GM12878 (cell line): ENCODE measurements at regions of chr5 and their contacts with region 1.

Region 1: DNA sequence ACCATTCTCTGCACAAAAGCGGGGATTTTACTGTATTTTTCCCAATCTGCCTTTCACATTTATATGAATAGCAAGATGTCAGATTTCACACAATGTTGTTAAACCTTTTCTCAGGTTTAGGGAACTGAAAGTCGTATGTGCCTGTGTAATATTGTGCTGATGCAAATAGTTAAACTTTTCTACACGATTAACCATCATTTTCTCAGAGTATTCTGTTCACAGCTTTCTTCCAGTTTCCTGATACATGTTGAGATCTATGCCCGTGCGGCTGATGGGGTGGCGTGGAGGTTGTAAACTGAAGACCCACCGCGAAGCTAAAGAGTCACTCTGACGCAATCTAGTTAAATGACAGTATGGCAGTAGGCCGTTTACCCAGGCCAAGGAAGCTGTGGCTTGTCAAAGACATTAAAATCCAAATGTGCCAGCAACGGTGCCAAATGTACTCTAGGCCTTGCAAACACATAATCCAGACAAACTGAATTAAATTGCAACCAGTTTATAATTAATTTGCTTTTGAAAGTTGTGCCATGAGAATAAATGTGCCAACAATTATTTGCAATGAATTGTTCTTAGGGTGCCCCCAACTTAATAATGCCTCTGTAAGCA is 145.7 kb downstream of the EBF1 start:
- DNase-seq: peak; percentile 98
- ATAC-seq: peak; percentile 79
- H3K4me3 ChIP-seq: 0 out of 2 replicates have a peak overlapping the region, but pooled peaks have one; percentile 6
- H3K27ac ChIP-seq: peak overlapping the region; percentile 93
- H3K4me1 ChIP-seq: peaks cover 70% of the 10 kb centered on the region
- H3K27me3 ChIP-seq: no peaks in the 10 kb centered on the region
- CTCF ChIP-seq: no peak
- EP300 ChIP-seq: peak; percentile 94 to 98; a peak in 3 of 4 replicates
- POLR2A ChIP-seq: peak; percentile 47; the same call in 1 of the 2 replicates
- RAD21 ChIP-seq: 0 out of 2 replicates have a peak, but pooled peaks have one; percentile 23

Region 2: GRCh38 chr5:158406884-158407823 is 546.9 kb before region 1 on chr5:
- CTCF ChIA-PET with region 1: no interaction called
- POLR2A ChIA-PET with region 1: no interaction called
- RAD21 ChIA-PET with region 1: interaction called, 5 read pairs
- SMC1A ChIA-PET with region 1: interaction called, 4 read pairs
- in situ Hi-C with region 1: no loop called
- intact Hi-C with region 1: loop called (anchors 10 kb)
- DNase-seq: no peak
- ATAC-seq: peak; percentile 82
- H3K4me3 ChIP-seq: no peak overlapping the region
- H3K27ac ChIP-seq: no peak overlapping the region
- H3K4me1 ChIP-seq: peaks cover 5% of the 10 kb centered on the region; the same call in 1 of the 2 replicates
- H3K27me3 ChIP-seq: no peaks in the 10 kb centered on the region
- CTCF ChIP-seq: no peak
- EP300 ChIP-seq: peak in 1 of 2 experiments; percentile 29; a peak in 1 of 4 replicates
- POLR2A ChIP-seq: no peak
- RAD21 ChIP-seq: no peak

Region 3: DNA sequence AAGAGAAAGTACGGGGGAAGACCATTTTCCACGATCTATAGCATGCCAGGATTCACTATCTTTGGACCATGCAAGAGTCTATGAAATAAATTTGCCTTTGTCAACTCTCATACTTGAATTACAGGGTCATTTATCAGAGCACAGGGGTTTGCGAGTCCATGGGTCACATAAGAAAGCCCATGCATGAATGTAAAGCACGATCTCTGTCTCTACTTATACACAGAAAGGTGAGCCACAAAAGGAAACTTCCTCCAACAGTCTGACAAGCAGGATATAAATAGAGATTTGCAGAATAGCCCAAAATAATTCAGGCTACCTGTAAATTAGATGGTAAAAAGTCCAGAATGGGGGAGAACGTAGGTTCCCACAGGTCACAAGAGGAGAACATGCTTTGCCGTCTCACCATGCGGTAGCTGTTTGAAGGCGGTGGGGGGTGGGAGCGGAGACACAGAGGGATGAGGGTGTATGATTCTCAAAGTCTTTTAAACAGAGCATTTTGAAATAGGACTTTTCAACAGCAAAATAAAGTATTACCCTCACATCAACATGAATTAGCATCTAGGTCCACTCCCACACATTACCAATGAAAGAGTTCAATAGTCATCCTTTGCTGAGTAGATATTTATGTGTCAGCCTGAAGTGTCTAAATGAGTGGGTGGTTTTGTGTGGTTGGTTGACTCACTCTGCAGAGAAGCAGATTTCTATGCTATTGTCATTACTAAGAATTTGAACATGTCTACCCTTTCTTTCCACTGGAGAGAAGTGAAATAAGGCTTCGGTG is 134.0 kb before region 1 on chr5:
- CTCF ChIA-PET with region 1: interaction called, 3 read pairs
- POLR2A ChIA-PET with region 1: interaction called, 3 read pairs
- RAD21 ChIA-PET with region 1: interaction called, 9 read pairs
- SMC1A ChIA-PET with region 1: interaction called, 12 read pairs
- in situ Hi-C with region 1: no loop called
- intact Hi-C with region 1: no loop called
- DNase-seq: peak; percentile 77
- ATAC-seq: peak; percentile 90
- H3K4me3 ChIP-seq: peak overlapping the region; percentile 53
- H3K27ac ChIP-seq: peak overlapping the region; percentile 83
- H3K4me1 ChIP-seq: peaks cover 50% of the 10 kb centered on the region
- H3K27me3 ChIP-seq: no peaks in the 10 kb centered on the region
- CTCF ChIP-seq: no peak
- EP300 ChIP-seq: peak in 1 of 2 experiments; percentile 5; a peak in 1 of 4 replicates
- POLR2A ChIP-seq: no peak
- RAD21 ChIP-seq: peak; percentile 10; the same call in 1 of the 2 replicates

Region 4: DNA sequence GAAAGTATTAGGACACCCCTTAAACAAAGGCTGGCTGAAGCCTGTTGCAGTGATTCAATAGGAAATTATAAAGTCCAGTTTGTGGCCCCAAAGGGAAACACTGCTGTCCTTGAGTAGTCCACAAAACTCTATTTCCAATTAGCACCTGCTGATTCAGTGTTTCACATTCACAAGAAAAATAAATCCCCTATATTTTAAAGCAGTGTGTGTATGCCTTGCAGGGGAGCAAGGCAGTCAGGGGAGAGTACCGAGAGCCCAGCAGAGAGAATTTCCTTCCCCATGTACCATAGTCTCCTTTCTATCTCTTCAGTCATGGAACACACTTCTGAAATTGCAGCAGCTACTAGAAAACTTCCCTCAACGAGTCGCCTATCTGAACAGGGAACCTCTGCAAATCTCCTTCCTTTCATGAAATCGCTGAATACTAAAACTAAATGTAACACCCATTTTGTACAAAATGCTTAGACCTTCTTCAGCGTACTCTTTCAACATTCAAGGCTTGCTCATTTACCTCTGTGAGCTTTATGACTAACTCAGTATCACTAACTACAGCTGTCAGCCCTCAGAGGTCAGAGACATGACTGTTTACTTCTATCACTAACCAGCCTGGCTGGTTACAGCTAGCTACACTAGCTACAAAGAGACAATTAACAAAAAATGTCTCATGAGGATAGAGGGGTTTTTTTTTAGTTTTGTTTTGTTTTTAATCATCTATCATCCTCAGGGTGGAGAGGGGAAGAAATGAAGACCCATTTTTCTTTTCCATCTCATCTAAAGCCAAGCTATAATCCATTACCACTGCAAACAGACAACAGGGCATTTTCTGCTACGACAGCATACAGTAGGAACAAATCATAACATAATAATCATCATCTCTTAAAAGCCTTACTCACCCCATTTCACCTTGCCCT is 43.0 kb before region 1 on chr5:
- CTCF ChIA-PET with region 1: interaction called, 4 read pairs
- POLR2A ChIA-PET with region 1: interaction called, 7 read pairs
- RAD21 ChIA-PET with region 1: interaction called, 32 read pairs
- SMC1A ChIA-PET with region 1: interaction called, 399 read pairs
- in situ Hi-C with region 1: no loop called
- intact Hi-C with region 1: loop called (anchors 5 kb)
- DNase-seq: no peak
- ATAC-seq: peak; percentile 88
- H3K4me3 ChIP-seq: no peak overlapping the region
- H3K27ac ChIP-seq: peak overlapping the region; percentile 50
- H3K4me1 ChIP-seq: peaks cover 32% of the 10 kb centered on the region
- H3K27me3 ChIP-seq: no peaks in the 10 kb centered on the region
- CTCF ChIP-seq: no peak
- EP300 ChIP-seq: peak; percentile 29 to 85; a peak in 2 of 4 replicates
- POLR2A ChIP-seq: no peak
- RAD21 ChIP-seq: no peak

Region 5: DNA sequence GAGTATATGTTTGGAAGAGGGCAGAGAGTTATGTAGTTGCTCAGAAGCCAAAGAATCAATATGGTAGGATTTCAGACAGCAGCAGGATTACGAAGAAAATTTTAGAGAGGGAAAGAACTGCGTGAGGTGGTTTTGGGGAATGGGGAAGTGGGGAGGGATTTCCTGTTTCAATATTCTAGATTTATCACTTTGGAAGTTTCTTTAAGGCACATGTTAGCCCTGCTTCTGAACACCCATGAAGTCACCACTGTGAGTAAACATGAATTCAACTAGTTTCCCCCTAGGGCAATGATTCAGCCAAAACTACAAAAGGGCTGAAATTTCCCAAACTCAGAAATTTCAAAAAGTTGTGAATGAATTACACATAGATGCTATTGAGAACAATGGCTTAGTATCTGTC is 13.5 kb after region 1 on chr5:
- CTCF ChIA-PET with region 1: interaction called, 9 read pairs
- POLR2A ChIA-PET with region 1: interaction called, 8 read pairs
- RAD21 ChIA-PET with region 1: interaction called, 44 read pairs
- SMC1A ChIA-PET with region 1: interaction called, 35 read pairs
- in situ Hi-C with region 1: no loop called
- intact Hi-C with region 1: no loop called
- DNase-seq: no peak
- ATAC-seq: peak; percentile 74
- H3K4me3 ChIP-seq: no peak overlapping the region
- H3K27ac ChIP-seq: peak overlapping the region; percentile 14; the same call in 1 of the 2 replicates
- H3K4me1 ChIP-seq: peaks cover 6% of the 10 kb centered on the region
- H3K27me3 ChIP-seq: no peaks in the 10 kb centered on the region
- CTCF ChIP-seq: no peak
- EP300 ChIP-seq: peak in 1 of 2 experiments; percentile 23; a peak in 1 of 4 replicates
- POLR2A ChIP-seq: no peak
- RAD21 ChIP-seq: no peak

Region 6: DNA sequence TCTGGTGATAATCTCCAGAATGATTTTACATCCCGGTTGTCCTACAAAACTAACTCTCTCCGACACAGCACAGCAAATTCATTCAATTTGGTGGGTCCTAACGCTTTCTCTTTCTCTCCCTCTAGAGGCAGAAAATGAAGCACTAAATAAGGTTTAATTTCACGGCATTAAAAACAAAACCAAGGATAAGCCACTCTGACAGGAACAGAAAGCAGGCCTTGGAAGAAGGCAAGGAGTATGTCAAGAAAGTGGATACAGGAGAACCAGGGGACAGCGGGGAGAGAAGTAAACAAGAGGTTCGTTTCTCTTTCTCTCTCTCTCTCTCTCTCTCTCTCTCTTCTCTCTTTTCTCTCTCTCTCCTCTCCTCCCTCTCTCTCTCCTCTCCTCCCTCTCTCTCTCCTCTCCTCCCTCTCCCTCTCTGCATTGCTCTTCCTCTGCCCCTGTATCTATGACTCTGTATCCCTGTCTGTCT is 95.8 kb after region 1 on chr5:
- CTCF ChIA-PET with region 1: interaction called, 7 read pairs
- POLR2A ChIA-PET with region 1: interaction called, 5 read pairs
- RAD21 ChIA-PET with region 1: interaction called, 12 read pairs
- SMC1A ChIA-PET with region 1: interaction called, 20 read pairs
- in situ Hi-C with region 1: no loop called
- intact Hi-C with region 1: loop called (anchors 5 kb)
- DNase-seq: no peak
- ATAC-seq: peak; percentile 1
- H3K4me3 ChIP-seq: peak overlapping the region; percentile 49
- H3K27ac ChIP-seq: peak overlapping the region; percentile 70
- H3K4me1 ChIP-seq: peaks cover 17% of the 10 kb centered on the region
- H3K27me3 ChIP-seq: no peaks in the 10 kb centered on the region
- CTCF ChIP-seq: peak; percentile 15 to 45 (median 32); a peak in 5 of 6 replicates
- EP300 ChIP-seq: no peak
- POLR2A ChIP-seq: no peak
- RAD21 ChIP-seq: peak; percentile 59

Region 7: GRCh38 chr5:159106569-159107282 is 152.7 kb after region 1 on chr5:
- CTCF ChIA-PET with region 1: interaction called, 16 read pairs
- POLR2A ChIA-PET with region 1: interaction called, 7 read pairs
- RAD21 ChIA-PET with region 1: interaction called, 17 read pairs
- SMC1A ChIA-PET with region 1: interaction called, 27 read pairs
- in situ Hi-C with region 1: no loop called
- intact Hi-C with region 1: loop called (anchors 2 kb)
- DNase-seq: no peak
- ATAC-seq: peak; percentile 83
- H3K4me3 ChIP-seq: peak overlapping the region; percentile 61
- H3K27ac ChIP-seq: no peak overlapping the region
- H3K4me1 ChIP-seq: peaks cover 12% of the 10 kb centered on the region
- H3K27me3 ChIP-seq: no peaks in the 10 kb centered on the region; a peak in 2 of 4 replicates
- CTCF ChIP-seq: peak; percentile 84 to 94 (median 92)
- EP300 ChIP-seq: no peak
- POLR2A ChIP-seq: no peak
- RAD21 ChIP-seq: peak; percentile 95